ENCODE measurements at regions of chr5 and their contacts with region 1.

Region 1: DNA sequence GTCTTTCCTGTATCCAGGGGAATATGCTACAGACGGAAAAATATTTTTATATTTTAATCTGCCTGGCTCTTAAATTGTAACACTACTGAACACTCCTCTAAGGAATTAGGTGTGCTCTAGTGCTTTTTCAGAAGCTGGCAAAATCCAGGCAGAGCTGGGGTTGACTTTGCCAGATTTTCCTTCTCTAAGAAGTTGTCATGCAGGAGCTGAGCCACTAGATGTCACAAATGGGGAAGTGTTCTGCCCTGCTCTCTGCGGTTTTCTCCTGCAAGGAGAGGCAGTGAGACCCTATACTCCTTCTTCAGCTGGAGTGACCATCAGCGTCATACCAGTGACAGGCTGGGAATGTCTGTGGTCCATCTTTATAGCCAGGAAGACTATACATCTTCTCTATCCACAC is 112.5 kb downstream of the HAPLN1 start:
- DNase-seq: peak; percentile 38
- ATAC-seq: peak; percentile 97
- H3K4me3 ChIP-seq: no peak overlapping the region
- H3K27ac ChIP-seq: no peak overlapping the region
- H3K4me1 ChIP-seq: no peaks in the 10 kb centered on the region
- H3K27me3 ChIP-seq: no peaks in the 10 kb centered on the region
- CTCF ChIP-seq: peak; percentile 23 to 70 (median 58); a peak in 5 of 6 replicates
- POLR2A ChIP-seq: no peak
- RAD21 ChIP-seq: peak; percentile 62

Region 2: DNA sequence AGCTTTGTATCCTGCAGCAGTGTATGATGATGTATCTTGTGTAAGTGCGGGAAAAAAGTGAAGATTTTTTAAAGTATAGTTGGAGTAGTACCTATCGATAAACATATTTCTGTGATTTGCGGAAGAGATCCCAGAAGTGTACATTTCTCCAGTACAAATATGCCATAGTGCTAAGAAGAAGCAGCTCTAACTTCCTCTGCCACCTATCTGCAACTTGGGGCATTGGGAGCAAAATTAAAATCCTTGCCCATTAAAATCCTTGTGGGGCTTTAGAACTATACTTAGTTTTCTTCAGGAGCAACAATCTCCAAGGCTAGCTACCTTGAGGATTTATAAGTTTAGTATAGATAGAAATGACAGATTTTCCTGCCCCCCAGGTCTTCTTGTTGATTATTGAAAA is 12.9 kb before region 1 on chr5:
- CTCF ChIA-PET with region 1: interaction called, 11 read pairs
- POLR2A ChIA-PET with region 1: no interaction called
- RAD21 ChIA-PET with region 1: no interaction called
- intact Hi-C with region 1: no loop called
- DNase-seq: no peak
- ATAC-seq: 0 out of 2 replicates have a peak, but pooled peaks have one; percentile 53
- H3K4me3 ChIP-seq: no peak overlapping the region
- H3K27ac ChIP-seq: no peak overlapping the region
- H3K4me1 ChIP-seq: no peaks in the 10 kb centered on the region
- H3K27me3 ChIP-seq: no peaks in the 10 kb centered on the region
- CTCF ChIP-seq: peak in 2 of 3 experiments; percentile 48 to 62; a peak in 4 of 6 replicates
- POLR2A ChIP-seq: no peak
- RAD21 ChIP-seq: peak; percentile 37

Region 3: DNA sequence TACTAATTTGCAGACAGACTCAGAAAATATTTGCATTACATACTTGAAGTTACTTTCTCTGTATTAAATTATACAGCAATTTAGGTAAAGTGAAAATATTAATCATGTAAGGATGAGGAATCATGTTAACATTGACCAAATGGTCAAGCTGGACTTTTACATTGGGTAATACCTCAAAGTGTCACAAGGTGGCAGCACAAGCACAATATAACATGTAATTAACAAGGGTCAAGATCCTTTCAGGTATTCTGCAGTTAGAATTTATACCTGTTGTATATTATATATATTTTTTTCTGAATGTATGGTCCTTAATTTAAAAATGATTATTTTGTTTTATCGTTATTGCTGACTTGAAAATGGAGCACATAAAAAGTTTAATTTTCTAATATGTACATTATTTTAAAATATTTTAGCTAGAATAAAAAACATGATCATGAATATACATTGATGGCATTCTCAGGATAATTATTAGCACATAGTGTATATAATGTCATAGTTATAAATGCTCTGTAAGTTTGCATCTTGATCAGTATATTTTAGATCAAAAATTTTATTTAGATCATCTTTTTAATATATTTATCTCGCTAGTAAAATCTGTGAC is 104.0 kb after region 1 on chr5:
- CTCF ChIA-PET with region 1: interaction called, 19 read pairs
- POLR2A ChIA-PET with region 1: no interaction called
- RAD21 ChIA-PET with region 1: interaction called in 1 of 2 experiments, 3 read pairs
- intact Hi-C with region 1: no loop called
- DNase-seq: no peak
- ATAC-seq: peak; percentile 71
- H3K4me3 ChIP-seq: no peak overlapping the region
- H3K27ac ChIP-seq: no peak overlapping the region
- H3K4me1 ChIP-seq: no peaks in the 10 kb centered on the region
- H3K27me3 ChIP-seq: no peaks in the 10 kb centered on the region
- CTCF ChIP-seq: peak; percentile 34 to 73 (median 64); a peak in 5 of 6 replicates
- POLR2A ChIP-seq: no peak
- RAD21 ChIP-seq: peak; percentile 59

Region 4: GRCh38 chr5:83937837-83938236 is 329.7 kb after region 1 on chr5:
- CTCF ChIA-PET with region 1: no interaction called
- POLR2A ChIA-PET with region 1: no interaction called
- RAD21 ChIA-PET with region 1: no interaction called
- intact Hi-C with region 1: no loop called
- DNase-seq: no peak
- ATAC-seq: no peak
- H3K4me3 ChIP-seq: no peak overlapping the region
- H3K27ac ChIP-seq: no peak overlapping the region
- H3K4me1 ChIP-seq: no peaks in the 10 kb centered on the region
- H3K27me3 ChIP-seq: no peaks in the 10 kb centered on the region
- CTCF ChIP-seq: no peak
- POLR2A ChIP-seq: no peak
- RAD21 ChIP-seq: no peak

Measured in HCT116 (cell line).